ENCODE measurements at regions of chr15 and their contacts with region 1.

Region 1: GRCh38 chr15:92903941-92904831 is 4.1 kb downstream of the CHD2 start:
- DNase-seq: peak; percentile 99
- H3K4me3 ChIP-seq: peak overlapping the region; percentile 80
- H3K4me3 Mint-ChIP-seq: peak overlapping the region; percentile 90 to 100 (median 91)
- H3K27ac ChIP-seq: peak overlapping the region; percentile 97
- H3K27ac Mint-ChIP-seq: peak overlapping the region; percentile 98 to 100 (median 99)
- H3K4me1 ChIP-seq: peaks cover 54% of the 10 kb centered on the region
- H3K4me1 Mint-ChIP-seq: peaks cover 63 to 74% (median 70%) of the 10 kb centered on the region in 3 donors
- H3K27me3 ChIP-seq: no peaks in the 10 kb centered on the region
- H3K27me3 Mint-ChIP-seq: peaks cover 0 to 12% of the 10 kb centered on the region in 2 donors

Region 2: DNA sequence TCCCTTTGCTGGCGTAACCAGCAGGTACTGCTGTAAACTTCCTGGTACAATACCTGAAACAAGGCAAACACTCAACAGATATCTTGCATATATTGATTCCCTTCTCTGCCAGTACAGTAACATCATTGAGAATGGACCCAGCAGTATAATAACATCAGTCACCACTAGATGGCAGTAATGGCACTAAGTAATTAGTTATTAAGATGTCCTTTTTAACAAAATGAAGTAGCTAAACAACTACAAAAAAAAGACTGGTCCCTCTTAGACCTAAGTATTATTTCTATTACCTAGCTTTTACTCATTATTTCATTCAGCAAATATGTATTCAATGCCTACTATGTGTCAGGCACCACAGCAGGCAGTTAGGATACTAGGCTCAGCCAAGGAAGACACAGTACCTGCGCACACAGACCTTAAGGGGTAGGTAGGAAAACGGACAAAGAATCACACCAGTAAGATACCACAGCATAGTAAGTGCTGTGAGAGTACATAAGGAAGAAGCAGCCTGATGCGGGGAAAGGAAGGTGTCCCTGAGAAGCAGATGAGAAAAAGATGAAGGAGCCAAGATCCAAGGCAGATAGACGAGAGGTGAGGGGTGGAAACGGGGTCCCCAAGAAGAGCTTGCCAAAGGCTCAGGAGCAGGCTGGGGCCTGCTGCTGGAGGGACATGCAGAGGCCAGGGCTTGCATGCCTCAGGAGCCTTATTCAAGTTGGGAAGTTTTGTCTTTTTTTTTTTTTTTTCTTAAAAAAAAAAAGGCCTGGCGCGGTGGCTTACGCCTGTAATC is 106.8 kb before region 1 on chr15:
- CTCF ChIA-PET with region 1: interaction called, 13 read pairs
- POLR2A ChIA-PET with region 1: interaction called, 5 read pairs
- DNase-seq: peak in 4 of 5 donors; percentile 16 to 68 (median 58)
- H3K4me3 ChIP-seq: no peak overlapping the region
- H3K4me3 Mint-ChIP-seq: no peak overlapping the region
- H3K27ac ChIP-seq: no peak overlapping the region
- H3K27ac Mint-ChIP-seq: peak overlapping the region in 5 of 8 donors; percentile 52 to 89 (median 79)
- H3K4me1 ChIP-seq: no peaks in the 10 kb centered on the region
- H3K4me1 Mint-ChIP-seq: peaks cover 4 to 7% (median 6%) of the 10 kb centered on the region in 3 donors
- H3K27me3 ChIP-seq: no peaks in the 10 kb centered on the region
- H3K27me3 Mint-ChIP-seq: no peaks in the 10 kb centered on the region

Region 3: DNA sequence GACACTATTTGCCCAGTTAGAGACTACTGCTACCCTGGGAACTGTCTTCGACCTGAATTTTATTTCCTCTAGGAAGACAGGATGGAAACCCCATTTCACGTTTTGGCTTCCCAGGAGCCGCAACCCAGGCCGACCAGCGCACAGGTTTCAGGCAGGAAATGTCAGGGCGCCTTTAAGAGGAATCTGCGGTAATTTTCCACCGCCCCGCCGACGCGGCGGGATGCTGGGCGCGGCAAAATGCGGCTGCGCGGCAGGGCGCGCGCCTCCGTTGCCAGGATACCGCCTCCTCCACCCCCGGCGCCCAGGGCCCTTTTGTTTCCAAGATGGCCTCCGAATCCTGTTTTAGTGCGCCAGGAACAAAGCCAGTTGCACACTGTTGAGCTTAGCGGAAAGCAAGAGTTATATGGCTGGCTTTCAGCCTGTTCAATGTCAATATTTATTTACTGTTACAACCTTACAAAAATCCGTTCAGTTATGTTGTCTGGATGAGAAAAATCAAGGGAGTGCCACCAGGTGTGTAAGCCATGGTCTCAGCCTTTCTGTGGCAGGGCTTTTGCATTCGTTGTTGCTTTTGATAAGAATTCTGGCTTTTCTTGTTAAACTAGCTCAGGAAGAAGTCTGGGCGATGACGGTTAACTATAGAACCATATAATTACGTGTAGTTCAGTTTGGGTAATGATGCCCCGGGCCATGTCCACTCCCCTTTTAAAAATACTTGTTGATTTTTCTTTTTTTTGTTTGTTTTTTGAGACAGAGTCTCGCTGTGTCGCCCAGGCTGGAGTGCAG is 83.8 kb before region 1 on chr15:
- CTCF ChIA-PET with region 1: interaction called, 3 read pairs
- POLR2A ChIA-PET with region 1: interaction called, 24 read pairs
- DNase-seq: peak; percentile 75 to 90 (median 86)
- H3K4me3 ChIP-seq: peak overlapping the region; percentile 60
- H3K4me3 Mint-ChIP-seq: peak overlapping the region; percentile 85 to 96 (median 92)
- H3K27ac ChIP-seq: peak overlapping the region; percentile 58
- H3K27ac Mint-ChIP-seq: peak overlapping the region; percentile 95 to 98 (median 97)
- H3K4me1 ChIP-seq: peaks cover 55% of the 10 kb centered on the region
- H3K4me1 Mint-ChIP-seq: peaks cover 32 to 60% (median 49%) of the 10 kb centered on the region in 3 donors
- H3K27me3 ChIP-seq: no peaks in the 10 kb centered on the region
- H3K27me3 Mint-ChIP-seq: no peaks in the 10 kb centered on the region

Region 4: DNA sequence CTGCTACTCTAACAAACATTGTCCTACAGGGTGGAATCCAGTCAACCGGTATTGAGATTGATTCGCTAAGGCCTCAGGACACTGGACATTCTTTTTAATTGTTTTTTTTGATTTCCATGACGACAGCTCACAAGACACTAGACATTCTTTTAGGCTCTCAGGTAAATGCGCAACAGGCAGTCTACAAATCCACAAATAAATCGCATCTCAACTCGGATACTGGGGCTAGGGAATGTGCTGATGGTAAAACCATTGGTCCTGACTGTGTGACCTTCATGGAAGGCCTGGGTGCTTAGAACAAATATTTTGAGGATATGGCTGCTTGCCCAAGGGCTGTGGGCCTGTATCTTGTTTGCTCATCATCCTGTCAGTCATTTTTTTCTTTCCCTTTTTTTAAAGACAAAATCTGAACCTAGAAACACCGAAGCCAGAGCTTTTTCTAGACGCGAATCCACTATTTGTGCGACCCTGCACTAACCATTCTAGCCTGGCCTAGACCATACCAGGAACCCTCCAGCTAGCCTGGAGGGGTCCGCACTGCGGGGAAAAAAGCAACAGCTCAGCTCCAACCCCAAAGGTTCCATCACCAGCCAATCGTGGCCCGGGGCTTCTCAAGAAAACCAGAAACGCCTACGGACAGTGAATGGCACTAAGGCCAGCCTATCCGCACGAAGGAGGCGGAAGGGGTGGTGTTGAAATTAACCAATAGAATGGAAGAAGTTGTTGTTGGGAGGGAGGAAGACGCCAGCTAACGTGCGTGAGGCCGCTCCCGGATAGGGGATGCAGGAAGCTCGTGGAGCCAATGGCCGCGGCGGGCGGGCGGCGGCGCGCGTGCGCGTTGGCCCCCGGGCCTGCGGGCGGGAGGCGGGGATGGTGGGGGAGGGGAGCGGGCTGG is 22.1 kb before region 1 on chr15:
- CTCF ChIA-PET with region 1: interaction called, 79 read pairs
- POLR2A ChIA-PET with region 1: interaction called, 455 read pairs
- DNase-seq: peak; percentile 95 to 99 (median 98)
- H3K4me3 ChIP-seq: peak overlapping the region; percentile 51
- H3K4me3 Mint-ChIP-seq: peak overlapping the region; percentile 88 to 91 (median 89)
- H3K27ac ChIP-seq: peak overlapping the region; percentile 76
- H3K27ac Mint-ChIP-seq: peak overlapping the region; percentile 94 to 98 (median 98)
- H3K4me1 ChIP-seq: peaks cover 64% of the 10 kb centered on the region
- H3K4me1 Mint-ChIP-seq: peaks cover 58 to 70% (median 62%) of the 10 kb centered on the region in 3 donors
- H3K27me3 ChIP-seq: no peaks in the 10 kb centered on the region
- H3K27me3 Mint-ChIP-seq: peaks cover 0 to 7% of the 10 kb centered on the region in 2 donors

Region 5: DNA sequence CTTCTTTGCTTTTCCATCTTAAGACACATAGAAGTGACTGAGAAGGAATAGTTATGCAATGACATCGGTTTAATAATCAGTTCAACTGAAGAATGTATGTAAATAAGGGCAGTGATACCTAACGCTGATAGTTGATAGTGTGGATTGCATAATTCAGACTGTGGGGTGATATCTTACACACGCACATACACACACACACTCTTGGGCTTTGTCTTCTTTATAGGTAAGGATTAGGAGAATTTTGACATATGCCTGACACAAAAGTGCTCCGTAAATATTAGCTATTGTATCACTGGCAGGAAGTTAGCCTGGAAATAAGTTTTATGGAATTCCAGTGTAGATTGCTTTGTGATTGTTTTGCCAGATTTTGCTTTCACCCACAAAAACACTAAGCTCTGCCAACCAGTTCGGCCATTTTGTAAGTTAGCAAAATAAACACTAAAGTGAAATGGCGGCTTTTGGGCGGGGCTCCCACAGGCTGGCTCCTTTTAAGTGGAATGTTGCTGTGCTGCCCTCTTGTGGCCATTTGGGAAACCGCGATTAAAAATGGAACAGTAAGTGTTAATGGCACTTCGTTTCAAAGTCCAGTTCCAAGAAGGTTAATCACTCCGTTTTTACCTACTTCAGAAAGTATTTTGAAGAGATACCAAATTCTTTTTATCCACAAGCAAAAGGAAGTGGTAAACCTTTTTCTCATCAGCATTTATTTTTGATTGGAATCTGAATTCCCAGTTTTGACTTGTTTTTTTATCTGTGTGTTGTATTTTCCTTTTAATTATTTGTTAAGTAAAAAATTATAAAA is 13.6 kb after region 1 on chr15:
- CTCF ChIA-PET with region 1: interaction called, 28 read pairs
- POLR2A ChIA-PET with region 1: interaction called, 73 read pairs
- DNase-seq: peak; percentile 83 to 93 (median 86)
- H3K4me3 ChIP-seq: peak overlapping the region; percentile 25
- H3K4me3 Mint-ChIP-seq: peak overlapping the region in 6 of 7 donors; percentile 55 to 79 (median 64)
- H3K27ac ChIP-seq: peak overlapping the region; percentile 20
- H3K27ac Mint-ChIP-seq: peak overlapping the region; percentile 67 to 100 (median 93)
- H3K4me1 ChIP-seq: peaks cover 90% of the 10 kb centered on the region
- H3K4me1 Mint-ChIP-seq: peaks cover 74 to 94% (median 90%) of the 10 kb centered on the region in 3 donors
- H3K27me3 ChIP-seq: no peaks in the 10 kb centered on the region
- H3K27me3 Mint-ChIP-seq: peaks cover 0 to 3% of the 10 kb centered on the region in 2 donors

Measured in CD8-positive, alpha-beta memory T cell (primary cell).